ENCODE measurements at regions of chr1 and their contacts with region 1.

Region 1: GRCh38 chr1:89483010-89483756 is 41.4 kb upstream of the LRRC8B start:
- DNase-seq: peak; percentile 94
- H3K4me3 ChIP-seq: no peak overlapping the region
- H3K27ac ChIP-seq: no peak overlapping the region
- H3K4me1 ChIP-seq: peaks cover 2% of the 10 kb centered on the region
- H3K27me3 ChIP-seq: no peaks in the 10 kb centered on the region
- CTCF ChIP-seq: peak; percentile 51 to 76 (median 72)
- POLR2A ChIP-seq: no peak

Region 2: DNA sequence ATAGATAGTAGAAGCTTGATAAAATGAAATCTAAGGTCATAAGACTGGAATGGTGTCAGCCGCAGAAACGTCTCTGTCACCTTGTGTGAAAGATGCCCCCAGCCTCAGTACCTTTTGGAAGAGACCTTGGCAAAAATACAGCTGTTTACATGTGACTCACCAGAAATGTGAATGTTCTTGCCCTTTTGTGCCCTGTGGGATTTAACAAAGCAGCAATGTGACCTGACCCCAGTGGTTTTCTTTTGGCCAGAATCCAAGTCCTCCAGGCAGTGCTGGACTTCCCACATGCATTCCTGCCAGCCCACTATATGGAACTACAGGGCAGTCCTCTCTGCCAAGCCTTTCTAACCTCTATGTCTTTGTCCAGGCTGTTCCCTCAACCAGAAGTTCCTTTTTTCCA is 122.5 kb after region 1 on chr1:
- intact Hi-C with region 1: loop called (anchors 10 kb)
- DNase-seq: no peak
- H3K4me3 ChIP-seq: no peak overlapping the region
- H3K27ac ChIP-seq: no peak overlapping the region
- H3K4me1 ChIP-seq: peaks cover 36% of the 10 kb centered on the region
- H3K27me3 ChIP-seq: no peaks in the 10 kb centered on the region
- CTCF ChIP-seq: no peak
- POLR2A ChIP-seq: no peak

Region 3: GRCh38 chr1:89706700-89707012 is 223.5 kb after region 1 on chr1:
- intact Hi-C with region 1: no loop called
- DNase-seq: no peak
- H3K4me3 ChIP-seq: no peak overlapping the region
- H3K27ac ChIP-seq: no peak overlapping the region
- H3K4me1 ChIP-seq: no peaks in the 10 kb centered on the region
- H3K27me3 ChIP-seq: no peaks in the 10 kb centered on the region
- CTCF ChIP-seq: no peak
- POLR2A ChIP-seq: no peak

Region 4: GRCh38 chr1:89762779-89763648 is 279.8 kb after region 1 on chr1:
- intact Hi-C with region 1: loop called (anchors 5 kb)
- DNase-seq: peak; percentile 92
- H3K4me3 ChIP-seq: peak overlapping the region; percentile 24 to 32
- H3K27ac ChIP-seq: peak overlapping the region in 1 of 2 donors; percentile 21
- H3K4me1 ChIP-seq: peaks cover 6% of the 10 kb centered on the region
- H3K27me3 ChIP-seq: no peaks in the 10 kb centered on the region
- CTCF ChIP-seq: peak; percentile 91 to 96 (median 91)
- POLR2A ChIP-seq: no peak

Measured in testis (tissue), 5 donors.